ENCODE measurements at regions of chr1 and their contacts with region 1.

Region 1: DNA sequence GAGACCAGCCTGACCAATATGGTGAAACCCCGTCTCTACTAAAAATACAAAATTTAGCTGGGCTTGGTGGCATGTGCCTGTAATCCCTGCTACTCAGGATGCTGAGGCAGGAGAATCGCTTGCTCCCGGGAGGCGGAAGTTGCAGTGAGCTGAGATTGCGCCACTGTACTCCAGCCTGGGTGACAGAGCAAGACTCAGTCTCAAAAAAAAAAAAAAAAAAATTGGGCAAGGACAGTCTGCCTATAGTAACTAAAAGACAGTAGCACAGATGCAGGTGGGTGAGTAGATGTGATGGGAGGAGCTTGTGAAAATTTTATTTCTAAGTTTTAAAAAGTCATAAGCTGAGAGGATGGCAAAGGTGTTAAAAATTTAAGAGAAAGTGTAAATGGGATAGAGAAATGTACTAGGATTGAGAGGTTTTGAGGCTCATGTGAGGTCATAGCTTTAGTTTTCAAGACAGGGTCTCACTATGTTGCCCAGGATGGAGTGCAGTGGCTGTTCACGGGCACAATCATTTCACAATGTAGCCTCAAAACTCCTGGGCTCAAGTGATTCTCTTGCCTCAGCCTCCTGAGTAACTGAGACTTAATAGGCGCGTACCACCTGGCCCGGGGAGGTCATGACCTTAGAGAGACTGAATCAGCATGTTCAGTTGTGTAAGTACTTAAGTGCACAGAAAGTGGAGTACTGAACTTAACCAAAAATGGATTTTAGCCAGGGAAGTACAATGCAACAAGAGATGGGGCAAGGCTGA is 33.7 kb downstream of the PTP4A2 start:
- DNase-seq: peak; percentile 71 to 88 (median 84)
- H3K4me3 ChIP-seq: peak overlapping the region in 1 of 3 experiments; percentile 10
- H3K4me3 Mint-ChIP-seq: peak overlapping the region; percentile 37 to 56
- H3K27ac ChIP-seq: peak overlapping the region; percentile 47 to 86
- H3K27ac Mint-ChIP-seq: peak overlapping the region; percentile 86 to 98 (median 97)
- H3K4me1 ChIP-seq: peaks cover 60 to 72% of the 10 kb centered on the region in 2 donors
- H3K4me1 Mint-ChIP-seq: peaks cover 54% of the 10 kb centered on the region
- H3K27me3 ChIP-seq: no peaks in the 10 kb centered on the region
- H3K27me3 Mint-ChIP-seq: peaks cover 1 to 2% (median 2%) of the 10 kb centered on the region in 3 donors
- CTCF ChIP-seq: no peak

Region 2: DNA sequence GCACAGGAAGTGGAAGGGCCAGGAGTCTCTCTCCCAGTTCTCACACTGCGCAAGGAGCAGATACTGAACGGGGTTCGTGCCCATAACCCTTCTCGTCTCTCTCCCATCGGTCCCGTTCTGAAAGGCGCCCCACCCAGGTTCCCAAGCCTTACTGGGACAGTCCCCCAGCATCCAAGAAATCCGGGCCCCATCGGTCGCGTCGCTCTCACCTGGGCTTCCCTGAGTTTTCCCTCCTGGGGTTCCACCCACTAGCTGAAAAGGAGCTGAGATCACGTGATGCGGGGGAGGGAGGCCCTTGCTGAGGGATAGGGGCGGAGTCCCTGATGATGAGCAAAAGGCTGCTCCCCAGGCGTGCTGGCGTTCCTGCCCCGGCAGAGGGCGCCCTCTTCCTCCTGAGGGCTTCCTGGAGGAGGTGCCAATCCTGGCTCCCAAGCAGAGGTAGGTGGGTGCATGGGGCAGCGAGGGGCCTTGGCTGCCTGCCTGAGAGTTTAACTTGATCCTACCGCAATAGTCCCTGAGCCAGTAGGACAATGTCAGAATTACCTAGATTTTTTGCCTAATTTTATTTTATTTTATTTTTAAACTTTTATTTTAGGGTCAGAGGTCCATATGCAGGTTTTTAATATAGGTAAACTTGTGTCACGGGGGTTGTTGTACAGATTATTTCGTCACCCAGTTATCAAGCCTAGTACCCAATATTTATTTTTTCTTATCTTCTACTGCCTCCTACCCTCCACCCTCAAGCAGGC is 88.6 kb before region 1 on chr1 and contains the start of gene SPOCD1:
- intact Hi-C with region 1: loop called in 1 of 2 experiments (anchors 10 kb)
- DNase-seq: peak; percentile 71 to 82 (median 76)
- H3K4me3 ChIP-seq: no peak within 1 kb of the TSS
- H3K4me3 Mint-ChIP-seq: no peak within 1 kb of the TSS
- H3K27ac ChIP-seq: no peak within 1 kb of the TSS
- H3K27ac Mint-ChIP-seq: peak within 1 kb of the TSS in 5 of 7 donors; percentile 30 to 72 (median 37)
- H3K4me1 ChIP-seq: peaks cover 0 to 9% of the 10 kb centered on the region in 2 donors
- H3K4me1 Mint-ChIP-seq: peaks cover 28% of the 10 kb centered on the region
- H3K27me3 ChIP-seq: no peaks in the 10 kb centered on the region
- H3K27me3 Mint-ChIP-seq: peaks cover 3 to 14% (median 4%) of the 10 kb centered on the region in 3 donors
- CTCF ChIP-seq: peak; percentile 83
- polyA plus RNA-seq, gene SPOCD1: not detected

Region 3: DNA sequence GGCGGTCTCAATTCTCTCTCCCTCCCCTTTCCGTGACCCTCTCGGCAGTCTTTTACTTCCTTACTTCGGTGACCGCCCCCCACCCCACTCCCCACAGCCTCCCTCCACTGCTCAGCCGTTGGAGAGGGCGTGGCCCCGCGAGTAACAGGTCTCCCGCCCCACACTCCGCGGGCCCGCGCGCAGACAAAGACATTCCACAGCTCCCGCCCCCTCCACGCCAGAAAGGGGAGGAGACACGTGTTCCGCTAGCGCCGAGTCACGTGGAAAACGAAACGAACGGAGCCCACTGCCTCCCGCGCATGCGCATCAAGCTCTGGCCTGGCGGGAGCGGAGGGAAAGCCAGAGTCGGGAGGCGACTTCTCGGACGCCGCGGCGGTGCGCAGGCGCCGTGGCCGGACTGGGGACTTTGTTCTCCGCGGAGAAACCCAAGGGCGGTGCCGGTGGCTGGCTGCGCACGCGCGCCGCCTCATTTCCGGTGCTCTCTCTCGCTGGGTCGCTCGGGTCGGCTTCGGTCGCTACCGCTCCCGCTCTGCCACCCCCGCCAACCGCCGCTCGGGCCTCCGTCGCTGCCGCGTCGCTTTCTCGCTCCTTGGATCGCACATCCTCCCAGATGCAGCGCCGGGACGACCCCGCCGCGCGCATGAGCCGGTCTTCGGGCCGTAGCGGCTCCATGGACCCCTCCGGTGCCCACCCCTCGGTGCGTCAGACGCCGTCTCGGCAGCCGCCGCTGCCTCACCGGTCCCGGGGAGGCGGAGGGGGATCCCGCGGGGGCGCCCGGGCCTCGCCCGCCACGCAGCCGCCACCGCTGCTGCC is 109.1 kb after region 1 on chr1 and contains the start of gene KHDRBS1:
- intact Hi-C with region 1: no loop called
- DNase-seq: peak; percentile 99
- H3K4me3 ChIP-seq: peak within 1 kb of the TSS; percentile 90 to 98 (median 91)
- H3K4me3 Mint-ChIP-seq: peak within 1 kb of the TSS; percentile 98
- H3K27ac ChIP-seq: peak within 1 kb of the TSS; percentile 84 to 91
- H3K27ac Mint-ChIP-seq: peak within 1 kb of the TSS; percentile 89 to 97 (median 95)
- H3K4me1 ChIP-seq: peaks cover 30 to 33% of the 10 kb centered on the region in 2 donors
- H3K4me1 Mint-ChIP-seq: peaks cover 34% of the 10 kb centered on the region
- H3K27me3 ChIP-seq: no peaks in the 10 kb centered on the region
- H3K27me3 Mint-ChIP-seq: peaks cover 0 to 2% (median 0%) of the 10 kb centered on the region in 3 donors
- CTCF ChIP-seq: no peak
- polyA plus RNA-seq, gene KHDRBS1: 40.7 to 65.6 (median 51.6) TPM

Measured in CD14-positive monocyte (primary cell).